ENCODE measurements at regions of chr5 and their contacts with region 1.

Region 1: GRCh38 chr5:5419294-5420210 is 2.9 kb upstream of the ICE1 start:
- DNase-seq: peak in 2 of 4 donors; percentile 27 to 39
- ATAC-seq: no peak
- H3K4me3 ChIP-seq: no peak overlapping the region
- H3K27ac ChIP-seq: no peak overlapping the region
- H3K4me1 ChIP-seq: peaks cover 25 to 31% of the 10 kb centered on the region in 2 donors
- H3K27me3 ChIP-seq: no peaks in the 10 kb centered on the region
- CTCF ChIP-seq: peak; percentile 30 to 55

Region 2: GRCh38 chr5:4879693-4880303 is 539.8 kb before region 1 on chr5:
- intact Hi-C with region 1: loop called in 1 of 2 experiments (anchors 10 kb)
- DNase-seq: peak in 3 of 4 donors; percentile 66 to 83 (median 66)
- ATAC-seq: peak; percentile 97
- H3K4me3 ChIP-seq: no peak overlapping the region
- H3K27ac ChIP-seq: no peak overlapping the region
- H3K4me1 ChIP-seq: no peaks in the 10 kb centered on the region
- H3K27me3 ChIP-seq: no peaks in the 10 kb centered on the region
- CTCF ChIP-seq: peak; percentile 74 to 93

Region 3: DNA sequence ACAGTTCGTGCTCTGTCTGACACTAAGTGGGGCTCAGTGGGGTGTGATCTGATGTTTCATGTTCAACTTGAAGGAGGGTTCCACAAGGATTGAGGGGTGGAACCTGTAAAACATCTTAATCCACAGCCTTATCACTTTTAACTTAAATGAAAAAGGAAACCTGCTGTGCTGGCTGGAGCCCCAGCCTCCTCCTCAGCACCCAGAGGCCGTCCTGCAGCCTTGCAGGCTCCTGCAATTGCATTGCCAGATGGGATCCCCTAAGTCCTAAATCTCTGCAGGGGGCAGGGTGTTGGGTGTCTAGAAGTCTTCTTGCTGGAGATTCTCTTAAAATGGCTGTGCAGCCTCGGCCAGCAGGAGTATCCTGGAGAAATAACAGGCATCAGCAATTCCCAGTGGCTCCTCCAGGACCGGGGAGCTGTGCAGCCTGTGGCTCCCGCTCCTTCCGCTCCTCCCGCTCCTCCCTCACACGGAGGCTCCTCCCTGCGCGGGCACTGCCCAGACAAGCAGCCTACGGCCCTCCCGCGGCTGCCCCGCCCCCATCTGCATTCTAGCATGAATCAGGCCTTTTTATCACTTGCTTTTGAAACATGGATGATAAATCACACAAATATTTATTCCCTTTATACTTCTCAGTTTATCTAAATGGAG is 148.5 kb before region 1 on chr5:
- intact Hi-C with region 1: no loop called
- DNase-seq: peak; percentile 19 to 92 (median 67)
- ATAC-seq: peak; percentile 99
- H3K4me3 ChIP-seq: no peak overlapping the region
- H3K27ac ChIP-seq: no peak overlapping the region
- H3K4me1 ChIP-seq: no peaks in the 10 kb centered on the region
- H3K27me3 ChIP-seq: no peaks in the 10 kb centered on the region
- CTCF ChIP-seq: no peak